ENCODE measurements at regions of chr6 and their contacts with region 1.

Region 1: GRCh38 chr6:153301602-153302001 is 170.5 kb upstream of the RGS17 start:
- DNase-seq: no peak
- CTCF ChIP-seq: no peak

Region 2: DNA sequence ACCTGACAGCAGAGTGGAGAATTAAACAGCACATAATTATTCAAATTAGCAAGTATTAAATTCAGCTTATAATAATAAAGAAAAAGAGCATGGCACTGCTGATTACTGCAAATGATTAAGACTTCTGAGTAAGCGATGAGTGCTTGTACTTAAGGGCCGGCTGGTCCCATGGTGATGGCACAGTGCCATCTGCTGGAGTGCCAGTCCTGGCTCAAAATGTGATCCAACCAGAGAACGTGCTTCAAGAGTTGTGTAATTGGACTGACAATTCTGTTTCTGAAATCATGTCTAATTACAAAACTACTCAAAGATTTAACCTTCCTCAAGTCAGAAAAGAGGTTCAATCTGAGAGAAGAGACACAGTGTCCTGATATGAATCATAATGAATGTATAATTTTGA is 11.0 kb after region 1 on chr6:
- CTCF ChIA-PET with region 1: interaction called, 18 read pairs
- POLR2A ChIA-PET with region 1: no interaction called
- DNase-seq: peak; percentile 14
- CTCF ChIP-seq: peak; percentile 63